ENCODE measurements at regions of chr3 and their contacts with region 1.

Region 1: GRCh38 chr3:24264748-24265158 is 229.9 kb downstream of the THRB start:
- DNase-seq: peak; percentile 47
- ATAC-seq: peak; percentile 89
- H3K4me3 ChIP-seq: no peak overlapping the region
- H3K27ac ChIP-seq: no peak overlapping the region
- H3K4me1 ChIP-seq: no peaks in the 10 kb centered on the region
- H3K27me3 ChIP-seq: no peaks in the 10 kb centered on the region
- CTCF ChIP-seq: peak; percentile 77 to 86 (median 84)
- POLR2A ChIP-seq: no peak
- RAD21 ChIP-seq: peak; percentile 90

Region 2: DNA sequence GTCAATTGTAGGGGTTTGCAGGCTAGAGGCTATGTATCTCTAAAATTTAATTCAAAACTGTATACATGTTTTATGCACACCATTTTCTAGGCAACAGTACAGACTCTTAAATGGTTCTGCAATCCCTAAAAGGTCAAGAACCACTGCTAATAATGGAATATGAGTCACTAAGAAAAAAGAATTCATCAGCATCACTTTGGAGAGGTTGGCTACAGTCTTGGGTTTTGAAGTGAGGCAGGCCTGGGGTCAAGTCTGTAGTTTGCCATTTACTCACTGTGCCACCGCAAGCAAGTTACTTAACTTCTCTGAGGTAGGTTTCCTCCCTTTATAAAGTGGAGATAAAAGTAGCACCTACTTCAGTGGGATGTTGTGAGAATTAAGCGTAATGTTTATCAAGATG is 196.2 kb after region 1 on chr3:
- CTCF ChIA-PET with region 1: no interaction called
- POLR2A ChIA-PET with region 1: no interaction called
- RAD21 ChIA-PET with region 1: no interaction called
- intact Hi-C with region 1: no loop called
- DNase-seq: no peak
- ATAC-seq: no peak
- H3K4me3 ChIP-seq: no peak overlapping the region
- H3K27ac ChIP-seq: no peak overlapping the region
- H3K4me1 ChIP-seq: no peaks in the 10 kb centered on the region
- H3K27me3 ChIP-seq: no peaks in the 10 kb centered on the region
- CTCF ChIP-seq: no peak
- POLR2A ChIP-seq: no peak
- RAD21 ChIP-seq: no peak

Region 3: DNA sequence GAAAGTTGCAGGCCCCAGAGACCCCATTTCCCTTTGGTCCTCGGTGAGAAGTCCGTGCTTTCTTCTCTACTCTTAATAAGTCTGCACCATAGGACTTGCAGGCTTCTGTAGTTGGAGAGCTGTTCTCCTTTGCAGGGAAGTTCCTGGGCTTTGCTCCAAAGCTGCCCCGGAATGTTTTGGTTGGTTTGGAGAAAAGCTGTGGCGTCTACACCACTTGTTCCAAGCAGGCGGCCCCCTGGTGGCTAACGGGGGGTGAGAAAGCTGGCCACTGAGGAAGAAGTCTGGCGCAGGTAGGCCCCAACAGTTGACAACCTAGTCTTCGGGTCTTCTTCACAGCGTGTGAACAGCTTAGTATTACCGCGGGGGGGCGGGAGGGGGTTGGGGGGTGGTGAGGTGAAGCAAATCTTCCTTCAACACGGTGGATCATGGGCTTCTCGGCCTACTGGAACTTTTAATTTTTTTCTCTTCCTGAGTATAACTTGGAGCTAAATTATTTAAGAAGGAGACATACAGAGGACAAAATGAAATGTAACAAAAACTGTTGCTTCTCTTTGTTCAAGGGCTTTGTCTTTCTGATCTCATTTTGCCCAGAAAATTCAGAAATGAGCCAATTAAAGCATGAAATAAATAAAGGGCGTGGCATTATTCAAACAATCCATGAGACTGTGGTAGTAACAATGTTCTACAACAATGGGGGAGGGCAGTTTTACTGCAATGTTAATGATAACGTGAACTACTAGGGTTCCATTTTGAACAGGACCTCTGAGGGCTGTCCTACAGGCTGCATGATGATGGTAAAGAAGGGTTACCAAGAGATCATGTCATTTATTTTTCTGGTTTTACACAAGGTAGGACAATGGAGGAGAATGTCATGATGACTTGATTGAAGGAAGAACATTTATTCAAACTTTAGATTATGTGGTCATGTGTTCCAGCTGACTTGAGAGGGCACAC is 232.1 kb after region 1 on chr3:
- CTCF ChIA-PET with region 1: interaction called, 10 read pairs
- POLR2A ChIA-PET with region 1: no interaction called
- RAD21 ChIA-PET with region 1: no interaction called
- intact Hi-C with region 1: loop called (anchors 1 kb)
- DNase-seq: peak; percentile 68
- ATAC-seq: peak; percentile 33
- H3K4me3 ChIP-seq: no peak overlapping the region
- H3K27ac ChIP-seq: no peak overlapping the region
- H3K4me1 ChIP-seq: peaks cover 8 to 26% of the 10 kb centered on the region in 2 experiments; a peak in 3 of 4 replicates
- H3K27me3 ChIP-seq: no peaks in the 10 kb centered on the region; the same call in 1 of the 2 replicates
- CTCF ChIP-seq: peak; percentile 55 to 83 (median 70); a peak in 5 of 6 replicates
- POLR2A ChIP-seq: no peak
- RAD21 ChIP-seq: peak; percentile 49

Region 4: GRCh38 chr3:24582431-24583403 is 318.0 kb after region 1 on chr3:
- CTCF ChIA-PET with region 1: no interaction called
- POLR2A ChIA-PET with region 1: no interaction called
- RAD21 ChIA-PET with region 1: no interaction called
- intact Hi-C with region 1: loop called (anchors 2 kb)
- DNase-seq: no peak
- ATAC-seq: no peak; the same call in 1 of the 2 replicates
- H3K4me3 ChIP-seq: no peak overlapping the region
- H3K27ac ChIP-seq: no peak overlapping the region
- H3K4me1 ChIP-seq: no peaks in the 10 kb centered on the region
- H3K27me3 ChIP-seq: no peaks in the 10 kb centered on the region; the same call in 1 of the 2 replicates
- CTCF ChIP-seq: peak in 2 of 3 experiments; percentile 39 to 40; a peak in 3 of 6 replicates
- POLR2A ChIP-seq: no peak
- RAD21 ChIP-seq: peak; percentile 52

Region 5: DNA sequence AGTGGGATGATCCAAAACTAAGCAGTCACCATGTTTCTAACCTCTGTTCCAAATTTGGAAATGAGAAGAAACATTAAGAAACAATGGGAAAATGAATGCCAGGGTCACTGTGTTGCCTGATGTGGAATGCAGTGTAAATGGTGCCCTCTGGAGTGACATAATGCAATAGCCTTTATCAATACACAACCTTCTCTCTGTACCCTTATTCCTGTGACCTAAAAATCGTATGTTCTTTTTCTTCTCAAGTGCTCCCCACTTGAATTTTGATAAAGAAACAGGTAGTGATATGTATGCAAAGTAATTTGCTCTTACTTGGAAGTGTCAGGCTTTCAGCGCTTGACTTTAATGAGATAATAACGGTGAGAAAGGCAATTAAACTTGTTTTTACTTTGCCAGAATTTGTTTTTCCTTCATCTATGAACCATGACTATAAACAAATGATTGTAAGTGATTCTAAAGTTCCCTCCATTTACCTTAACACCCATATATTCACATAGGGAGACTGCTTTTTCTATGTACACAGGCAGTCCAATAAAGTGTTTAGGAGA is 375.7 kb after region 1 on chr3:
- CTCF ChIA-PET with region 1: interaction called, 3 read pairs
- POLR2A ChIA-PET with region 1: no interaction called
- RAD21 ChIA-PET with region 1: no interaction called
- intact Hi-C with region 1: loop called (anchors 1 kb)
- DNase-seq: peak; percentile 27
- ATAC-seq: peak; percentile 94
- H3K4me3 ChIP-seq: no peak overlapping the region
- H3K27ac ChIP-seq: no peak overlapping the region
- H3K4me1 ChIP-seq: no peaks in the 10 kb centered on the region
- H3K27me3 ChIP-seq: no peaks in the 10 kb centered on the region
- CTCF ChIP-seq: peak; percentile 52 to 69 (median 59); a peak in 5 of 6 replicates
- POLR2A ChIP-seq: no peak
- RAD21 ChIP-seq: peak; percentile 79

Region 6: GRCh38 chr3:24680214-24680967 is 415.6 kb after region 1 on chr3:
- CTCF ChIA-PET with region 1: interaction called, 9 read pairs
- POLR2A ChIA-PET with region 1: no interaction called
- RAD21 ChIA-PET with region 1: no interaction called
- intact Hi-C with region 1: loop called (anchors 2 kb)
- DNase-seq: peak; percentile 42
- ATAC-seq: peak; percentile 96
- H3K4me3 ChIP-seq: no peak overlapping the region
- H3K27ac ChIP-seq: no peak overlapping the region
- H3K4me1 ChIP-seq: peaks cover 0 to 6% of the 10 kb centered on the region in 2 experiments; a peak in 1 of 4 replicates
- H3K27me3 ChIP-seq: no peaks in the 10 kb centered on the region
- CTCF ChIP-seq: peak; percentile 48 to 93 (median 91); a peak in 5 of 6 replicates
- POLR2A ChIP-seq: no peak
- RAD21 ChIP-seq: peak; percentile 59